ENCODE measurements at regions of chr3 and their contacts with region 1.

Region 1: DNA sequence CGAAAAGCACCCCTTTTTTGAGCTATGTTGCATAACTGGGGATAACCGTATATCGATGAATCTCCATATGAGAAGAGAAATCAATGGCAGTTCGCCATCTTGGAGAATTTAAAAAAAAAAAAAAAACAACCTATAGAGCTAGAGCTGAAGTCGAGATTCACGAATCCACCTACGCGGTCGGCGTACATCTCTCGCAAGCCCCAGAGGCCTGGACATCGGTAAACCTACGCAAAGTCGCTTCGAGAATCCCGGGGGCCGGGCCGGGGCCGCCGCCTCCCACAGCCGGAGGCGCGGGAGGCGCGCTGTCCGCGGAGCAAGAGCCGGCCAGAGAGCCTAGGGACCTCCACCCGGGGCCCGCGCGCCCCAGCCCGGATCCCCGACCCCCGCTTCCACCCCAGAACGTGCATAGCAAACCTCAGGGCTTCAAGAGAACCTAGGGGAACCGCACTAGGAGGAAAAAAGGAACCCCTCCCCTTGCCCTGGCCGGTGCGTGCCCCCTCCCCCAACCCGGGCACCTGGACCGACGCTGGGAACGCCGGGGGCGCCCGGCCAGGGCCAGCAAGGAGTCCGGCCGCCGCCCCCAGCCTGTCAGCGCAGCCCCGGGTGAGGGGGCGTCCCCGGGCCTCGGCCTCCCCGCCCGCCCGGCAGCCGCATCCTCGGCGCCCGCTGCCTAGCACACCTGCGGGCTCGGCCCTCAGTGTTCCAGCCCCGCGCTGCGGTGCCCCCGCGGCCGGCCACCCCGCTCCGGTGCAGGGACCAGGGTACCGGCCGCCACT is 567 bp downstream of the PFN2 start:
- DNase-seq: peak; percentile 71
- H3K4me3 ChIP-seq: peak overlapping the region; percentile 76 to 93
- H3K27ac ChIP-seq: peak overlapping the region; percentile 94 to 98
- H3K4me1 ChIP-seq: peaks cover 0 to 15% of the 10 kb centered on the region in 2 experiments; a peak in 2 of 4 replicates
- H3K27me3 ChIP-seq: no peaks in the 10 kb centered on the region
- CTCF ChIP-seq: no peak
- EP300 ChIP-seq: no peak
- RAD21 ChIP-seq: no peak

Region 2: DNA sequence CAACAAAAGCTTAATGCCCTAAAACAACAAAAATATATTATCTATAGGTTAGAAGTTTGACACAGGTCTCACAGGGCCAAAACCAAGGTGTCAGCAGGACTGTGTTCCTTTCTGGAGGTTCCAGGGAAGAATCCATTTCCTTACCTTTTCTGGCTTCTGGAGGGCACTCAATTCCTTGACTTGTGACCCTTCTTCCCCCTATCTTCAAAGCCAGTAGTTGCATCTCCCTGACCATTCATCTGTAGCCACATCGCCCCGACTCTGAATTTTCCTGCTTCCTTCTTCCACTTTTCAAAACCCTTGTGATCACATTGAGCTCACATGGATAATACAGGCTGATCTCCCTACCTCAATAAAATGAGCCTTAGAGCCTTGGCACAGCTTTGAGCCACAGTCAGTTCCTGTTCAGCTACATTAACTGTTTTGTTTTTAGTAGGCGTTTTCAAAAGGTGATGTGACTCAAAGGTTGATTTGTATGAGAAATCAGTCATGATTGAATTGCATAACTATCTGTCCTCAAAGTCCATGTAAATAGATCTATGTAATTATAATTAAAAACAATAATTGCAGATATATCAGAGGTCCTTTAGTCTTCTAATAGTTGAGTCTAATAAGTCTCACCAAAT is 11.8 kb before region 1 on chr3:
- CTCF ChIA-PET with region 1: interaction called, 20 read pairs
- POLR2A ChIA-PET with region 1: no interaction called
- DNase-seq: no peak
- H3K4me3 ChIP-seq: no peak overlapping the region
- H3K27ac ChIP-seq: no peak overlapping the region
- H3K4me1 ChIP-seq: peaks cover 19 to 20% of the 10 kb centered on the region in 2 experiments; a peak in 3 of 4 replicates
- H3K27me3 ChIP-seq: no peaks in the 10 kb centered on the region
- CTCF ChIP-seq: no peak
- EP300 ChIP-seq: no peak
- RAD21 ChIP-seq: no peak

Region 3: GRCh38 chr3:150074697-150075416 is 104.7 kb after region 1 on chr3:
- CTCF ChIA-PET with region 1: no interaction called
- POLR2A ChIA-PET with region 1: no interaction called
- DNase-seq: no peak
- H3K4me3 ChIP-seq: no peak overlapping the region
- H3K27ac ChIP-seq: no peak overlapping the region
- H3K4me1 ChIP-seq: peaks cover 20 to 35% of the 10 kb centered on the region in 2 experiments
- H3K27me3 ChIP-seq: no peaks in the 10 kb centered on the region
- CTCF ChIP-seq: no peak
- EP300 ChIP-seq: no peak
- RAD21 ChIP-seq: no peak

Region 4: GRCh38 chr3:150216041-150216811 is 246.1 kb after region 1 on chr3:
- CTCF ChIA-PET with region 1: interaction called, 13 read pairs
- POLR2A ChIA-PET with region 1: interaction called, 4 read pairs
- DNase-seq: peak; percentile 32
- H3K4me3 ChIP-seq: no peak overlapping the region
- H3K27ac ChIP-seq: no peak overlapping the region
- H3K4me1 ChIP-seq: peaks cover 10 to 20% of the 10 kb centered on the region in 2 experiments; a peak in 3 of 4 replicates
- H3K27me3 ChIP-seq: no peaks in the 10 kb centered on the region
- CTCF ChIP-seq: no peak
- EP300 ChIP-seq: no peak
- RAD21 ChIP-seq: no peak

Measured in SK-N-SH (cell line).